Ascending aorta (tissue), 2 donors: ENCODE measurements at regions of chr13 and their contacts with region 1.

Region 1: GRCh38 chr13:107035778-107036177 is 467.8 kb upstream of the ARGLU1 start:
- DNase-seq: no peak
- H3K4me3 ChIP-seq: no peak overlapping the region
- H3K27ac ChIP-seq: no peak overlapping the region
- H3K4me1 ChIP-seq: peaks cover 0 to 13% of the 10 kb centered on the region in 2 donors
- H3K27me3 ChIP-seq: no peaks in the 10 kb centered on the region
- CTCF ChIP-seq: no peak

Region 2: DNA sequence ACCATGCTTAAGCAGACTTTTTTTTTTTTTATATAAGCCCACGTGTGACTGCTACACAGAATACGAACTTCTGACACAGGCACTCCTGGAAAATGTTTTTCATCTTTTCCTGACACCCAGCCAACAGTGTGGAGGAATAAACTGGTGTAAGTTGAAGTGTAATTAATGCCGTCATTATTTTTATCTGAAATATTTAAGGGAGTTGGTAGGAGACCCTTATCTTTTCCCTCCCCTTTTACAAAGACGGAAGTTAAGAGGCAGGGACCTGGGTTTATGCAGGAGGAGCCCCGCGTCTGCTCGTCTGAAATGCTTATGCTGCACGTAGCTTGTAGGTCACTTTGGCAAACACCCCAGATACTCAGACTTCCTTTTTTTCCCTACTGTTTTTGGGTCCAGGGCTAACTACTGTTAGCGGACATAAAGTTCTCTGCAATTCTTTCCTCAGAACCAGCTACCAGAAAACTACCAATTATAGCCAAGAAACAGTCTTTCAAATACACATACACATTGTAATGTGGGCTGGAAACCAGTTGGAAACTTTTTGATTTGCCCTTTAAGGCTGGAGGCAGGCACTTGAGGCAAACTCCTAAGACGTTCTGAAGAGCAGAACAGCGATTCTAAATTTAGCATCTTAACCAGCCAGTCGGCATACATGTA is 551.1 kb before region 1 on chr13:
- intact Hi-C with region 1: loop called (anchors 10 kb)
- DNase-seq: peak in 1 of 2 donors; percentile 80
- H3K4me3 ChIP-seq: peak overlapping the region; percentile 23 to 58
- H3K27ac ChIP-seq: peak overlapping the region; percentile 93 to 96
- H3K4me1 ChIP-seq: peaks cover 3 to 35% of the 10 kb centered on the region in 2 donors
- H3K27me3 ChIP-seq: no peaks in the 10 kb centered on the region
- CTCF ChIP-seq: no peak

Region 3: GRCh38 chr13:106927421-106927820 is 108.4 kb before region 1 on chr13:
- intact Hi-C with region 1: no loop called
- DNase-seq: no peak
- H3K4me3 ChIP-seq: no peak overlapping the region
- H3K27ac ChIP-seq: no peak overlapping the region
- H3K4me1 ChIP-seq: no peaks in the 10 kb centered on the region
- H3K27me3 ChIP-seq: no peaks in the 10 kb centered on the region
- CTCF ChIP-seq: no peak